CD4-positive, alpha-beta T cell (primary cell): ENCODE measurements at regions of chr1 and their contacts with region 1.

Region 1: GRCh38 chr1:203299169-203299568 is 6.2 kb upstream of the BTG2 start:
- DNase-seq: peak in 1 of 14 experiments; percentile 38
- ATAC-seq: peak; percentile 39
- H3K4me3 ChIP-seq: no peak overlapping the region
- H3K4me3 Mint-ChIP-seq: no peak overlapping the region
- H3K27ac ChIP-seq: no peak overlapping the region
- H3K27ac Mint-ChIP-seq: no peak overlapping the region
- H3K4me1 ChIP-seq: peaks cover 27% of the 10 kb centered on the region
- H3K4me1 Mint-ChIP-seq: peaks cover 76% of the 10 kb centered on the region
- H3K27me3 ChIP-seq: no peaks in the 10 kb centered on the region
- H3K27me3 Mint-ChIP-seq: no peaks in the 10 kb centered on the region
- CTCF ChIP-seq: no peak

Region 2: DNA sequence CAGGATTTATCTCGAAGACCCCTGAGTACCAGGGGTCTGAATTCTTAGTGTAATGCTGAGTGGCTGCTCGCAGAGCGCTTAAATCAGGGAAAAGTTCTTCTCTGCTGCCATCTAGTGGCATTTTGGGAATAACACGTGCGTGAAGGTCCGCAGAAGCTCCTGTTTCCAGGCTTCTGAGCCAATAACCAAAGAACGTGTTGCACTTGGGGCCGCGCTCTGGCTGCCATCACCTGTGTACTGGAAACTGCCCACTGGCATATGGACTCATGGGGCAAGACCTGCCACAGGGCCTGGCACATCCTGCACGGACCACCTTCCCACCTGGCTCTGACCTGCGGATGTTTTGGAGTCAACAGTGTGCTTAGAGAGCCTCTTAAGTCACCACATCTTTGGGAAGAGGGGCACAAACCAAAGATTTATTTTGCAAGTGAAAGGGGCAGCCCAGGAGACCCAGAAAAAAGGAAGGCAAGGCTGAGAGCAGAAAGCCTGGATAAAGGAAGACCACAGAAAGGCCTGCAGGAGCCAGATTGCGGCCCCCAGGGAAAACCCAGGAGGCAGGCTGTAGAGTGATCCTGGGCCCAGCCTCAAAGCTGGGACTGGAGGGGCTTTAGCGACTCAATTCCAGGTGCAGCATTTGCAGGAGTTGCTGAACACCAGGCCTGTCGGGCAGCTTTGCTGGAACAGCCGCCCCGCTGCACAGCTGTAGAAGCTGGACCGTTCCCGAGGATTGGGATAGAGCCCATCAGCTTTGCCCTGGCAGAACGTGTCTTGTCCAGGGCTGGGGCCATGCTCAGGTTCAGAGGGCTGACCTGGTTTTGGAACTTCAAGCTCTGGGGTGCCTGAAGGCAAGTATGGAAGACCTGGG is 82.7 kb before region 1 on chr1:
- CTCF ChIA-PET with region 1: no interaction called
- POLR2A ChIA-PET with region 1: no interaction called
- intact Hi-C with region 1: no loop called
- DNase-seq: peak; percentile 13 to 78 (median 39)
- ATAC-seq: peak; percentile 68
- H3K4me3 ChIP-seq: no peak overlapping the region
- H3K4me3 Mint-ChIP-seq: no peak overlapping the region
- H3K27ac ChIP-seq: no peak overlapping the region
- H3K27ac Mint-ChIP-seq: no peak overlapping the region
- H3K4me1 ChIP-seq: peaks cover 7% of the 10 kb centered on the region
- H3K4me1 Mint-ChIP-seq: peaks cover 6% of the 10 kb centered on the region
- H3K27me3 ChIP-seq: peaks cover 0 to 8% of the 10 kb centered on the region in 2 experiments
- H3K27me3 Mint-ChIP-seq: peaks cover 16% of the 10 kb centered on the region
- CTCF ChIP-seq: peak; percentile 81

Region 3: GRCh38 chr1:203320591-203321272 is 21.6 kb after region 1 on chr1:
- CTCF ChIA-PET with region 1: no interaction called
- POLR2A ChIA-PET with region 1: interaction called, 569 read pairs
- intact Hi-C with region 1: no loop called
- DNase-seq: peak; percentile 47 to 95 (median 78)
- ATAC-seq: peak; percentile 70
- H3K4me3 ChIP-seq: peak overlapping the region; percentile 13
- H3K4me3 Mint-ChIP-seq: peak overlapping the region; percentile 82
- H3K27ac ChIP-seq: peak overlapping the region; percentile 98 to 99
- H3K27ac Mint-ChIP-seq: peak overlapping the region; percentile 92
- H3K4me1 ChIP-seq: peaks cover 82% of the 10 kb centered on the region
- H3K4me1 Mint-ChIP-seq: peaks cover 93% of the 10 kb centered on the region
- H3K27me3 ChIP-seq: no peaks in the 10 kb centered on the region
- H3K27me3 Mint-ChIP-seq: no peaks in the 10 kb centered on the region
- CTCF ChIP-seq: no peak

Region 4: GRCh38 chr1:203326830-203327683 is 27.9 kb after region 1 on chr1:
- CTCF ChIA-PET with region 1: interaction called, 4 read pairs
- POLR2A ChIA-PET with region 1: interaction called, 569 read pairs
- intact Hi-C with region 1: no loop called
- DNase-seq: peak; percentile 89 to 97 (median 94)
- ATAC-seq: peak; percentile 65
- H3K4me3 ChIP-seq: peak overlapping the region; percentile 66
- H3K4me3 Mint-ChIP-seq: peak overlapping the region; percentile 81
- H3K27ac ChIP-seq: peak overlapping the region; percentile 98 to 99
- H3K27ac Mint-ChIP-seq: peak overlapping the region; percentile 92
- H3K4me1 ChIP-seq: peaks cover 67% of the 10 kb centered on the region
- H3K4me1 Mint-ChIP-seq: peaks cover 72% of the 10 kb centered on the region
- H3K27me3 ChIP-seq: no peaks in the 10 kb centered on the region
- H3K27me3 Mint-ChIP-seq: no peaks in the 10 kb centered on the region
- CTCF ChIP-seq: no peak